Activated naive CD4-positive, alpha-beta T cell treated with anti-CD3 and anti-CD28 coated beads for 36 hours (primary cell): ENCODE measurements at regions of chr6 and their contacts with region 1.

Region 1: DNA sequence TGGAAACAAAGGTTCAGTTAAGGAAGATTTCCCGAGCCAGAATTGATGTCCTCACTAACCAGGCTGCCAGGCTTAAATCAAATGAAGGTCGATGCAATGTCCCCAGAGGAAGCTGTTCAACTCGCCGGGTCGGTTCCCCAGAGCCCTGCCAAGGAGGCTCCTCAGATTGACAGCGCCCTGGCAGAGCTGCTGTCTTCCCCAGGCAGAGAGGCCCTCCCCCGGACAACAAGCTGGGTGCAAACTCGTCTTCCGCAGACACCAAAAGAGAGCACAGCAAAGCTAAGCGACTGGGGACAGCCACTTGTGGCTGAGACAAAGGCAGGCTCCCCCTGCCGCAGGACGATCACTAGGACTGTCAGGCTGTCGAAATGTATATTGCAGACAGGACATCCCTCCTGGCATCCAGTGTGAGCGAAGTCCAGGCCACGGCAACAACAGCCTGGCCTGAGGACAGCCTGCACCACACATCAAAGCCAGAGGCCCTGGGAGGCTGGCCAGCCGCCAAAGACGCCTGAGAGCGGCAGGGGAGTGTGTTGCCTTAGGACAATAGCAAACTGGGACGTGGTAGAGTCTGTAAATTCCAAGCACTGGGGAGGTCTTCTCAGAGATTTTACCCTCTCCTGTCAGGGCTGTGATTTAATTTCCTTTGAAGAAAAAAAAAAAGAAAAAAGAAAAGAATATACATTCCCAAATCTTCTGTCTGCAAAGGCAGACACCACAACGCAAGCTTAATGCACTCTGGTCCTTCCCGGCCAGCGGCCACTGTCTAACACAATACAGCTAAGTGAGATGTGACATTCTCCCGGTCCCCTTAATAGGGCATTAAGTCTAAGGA is 99.1 kb downstream of the HIVEP2 start:
- DNase-seq: peak; percentile 59
- H3K4me3 Mint-ChIP-seq: peak overlapping the region; percentile 66
- H3K27ac Mint-ChIP-seq: peak overlapping the region; percentile 89
- H3K4me1 Mint-ChIP-seq: peaks cover 95% of the 10 kb centered on the region
- H3K27me3 Mint-ChIP-seq: no peaks in the 10 kb centered on the region

Region 2: GRCh38 chr6:142679907-142680700 is 165.7 kb before region 1 on chr6:
- CTCF ChIA-PET with region 1: no interaction called
- intact Hi-C with region 1: no loop called
- DNase-seq: peak; percentile 71
- H3K4me3 Mint-ChIP-seq: no peak overlapping the region
- H3K27ac Mint-ChIP-seq: peak overlapping the region; percentile 10
- H3K4me1 Mint-ChIP-seq: peaks cover 36% of the 10 kb centered on the region
- H3K27me3 Mint-ChIP-seq: no peaks in the 10 kb centered on the region

Region 3: GRCh38 chr6:142773859-142774648 is 71.8 kb before region 1 on chr6:
- CTCF ChIA-PET with region 1: no interaction called
- intact Hi-C with region 1: loop called (anchors 1 kb)
- DNase-seq: peak; percentile 46
- H3K4me3 Mint-ChIP-seq: no peak overlapping the region
- H3K27ac Mint-ChIP-seq: peak overlapping the region; percentile 79
- H3K4me1 Mint-ChIP-seq: peaks cover 59% of the 10 kb centered on the region
- H3K27me3 Mint-ChIP-seq: no peaks in the 10 kb centered on the region

Region 4: GRCh38 chr6:142819603-142820337 is 26.1 kb before region 1 on chr6:
- CTCF ChIA-PET with region 1: interaction called, 8 read pairs
- intact Hi-C with region 1: loop called (anchors 1 kb)
- DNase-seq: peak; percentile 65
- H3K4me3 Mint-ChIP-seq: peak overlapping the region; percentile 79
- H3K27ac Mint-ChIP-seq: peak overlapping the region; percentile 94
- H3K4me1 Mint-ChIP-seq: peaks cover 83% of the 10 kb centered on the region
- H3K27me3 Mint-ChIP-seq: no peaks in the 10 kb centered on the region

Region 5: GRCh38 chr6:142857233-142857761 is 11.5 kb after region 1 on chr6:
- CTCF ChIA-PET with region 1: interaction called, 13 read pairs
- intact Hi-C with region 1: loop called (anchors 2 kb)
- DNase-seq: no peak
- H3K4me3 Mint-ChIP-seq: peak overlapping the region; percentile 68
- H3K27ac Mint-ChIP-seq: peak overlapping the region; percentile 69
- H3K4me1 Mint-ChIP-seq: peaks cover 95% of the 10 kb centered on the region
- H3K27me3 Mint-ChIP-seq: no peaks in the 10 kb centered on the region

Region 6: GRCh38 chr6:142885182-142885867 is 39.5 kb after region 1 on chr6:
- CTCF ChIA-PET with region 1: interaction called, 7 read pairs
- intact Hi-C with region 1: loop called (anchors 1 kb)
- DNase-seq: peak; percentile 66
- H3K4me3 Mint-ChIP-seq: peak overlapping the region; percentile 90
- H3K27ac Mint-ChIP-seq: peak overlapping the region; percentile 99
- H3K4me1 Mint-ChIP-seq: peaks cover 87% of the 10 kb centered on the region
- H3K27me3 Mint-ChIP-seq: no peaks in the 10 kb centered on the region

Region 7: GRCh38 chr6:142913511-142914047 is 67.7 kb after region 1 on chr6:
- CTCF ChIA-PET with region 1: no interaction called
- intact Hi-C with region 1: loop called (anchors 1 kb)
- DNase-seq: peak; percentile 82
- H3K4me3 Mint-ChIP-seq: peak overlapping the region; percentile 64
- H3K27ac Mint-ChIP-seq: peak overlapping the region; percentile 96
- H3K4me1 Mint-ChIP-seq: peaks cover 84% of the 10 kb centered on the region
- H3K27me3 Mint-ChIP-seq: no peaks in the 10 kb centered on the region

Region 8: GRCh38 chr6:143038833-143039232 is 193.0 kb after region 1 on chr6:
- CTCF ChIA-PET with region 1: no interaction called
- intact Hi-C with region 1: no loop called
- DNase-seq: no peak
- H3K4me3 Mint-ChIP-seq: no peak overlapping the region
- H3K27ac Mint-ChIP-seq: no peak overlapping the region
- H3K4me1 Mint-ChIP-seq: peaks cover 13% of the 10 kb centered on the region
- H3K27me3 Mint-ChIP-seq: no peaks in the 10 kb centered on the region